Naive thymus-derived CD4-positive, alpha-beta T cell (primary cell): ENCODE measurements at regions of chr3 and their contacts with region 1.

Region 1: GRCh38 chr3:30606301-30607031 is at the start of gene TGFBR2:
- DNase-seq: peak; percentile 57 to 85 (median 69)
- ATAC-seq: peak; percentile 84
- H3K4me3 ChIP-seq: peak within 1 kb of the TSS; percentile 76
- H3K4me3 Mint-ChIP-seq: peak within 1 kb of the TSS; percentile 88 to 100 (median 99)
- H3K27ac ChIP-seq: peak within 1 kb of the TSS; percentile 91
- H3K27ac Mint-ChIP-seq: peak within 1 kb of the TSS; percentile 93 to 100 (median 98)
- H3K4me1 ChIP-seq: peaks cover 32 to 39% of the 10 kb centered on the region in 2 donors
- H3K4me1 Mint-ChIP-seq: peaks cover 45 to 68% (median 55%) of the 10 kb centered on the region in 7 donors
- H3K27me3 ChIP-seq: no peaks in the 10 kb centered on the region
- H3K27me3 Mint-ChIP-seq: no peaks in the 10 kb centered on the region
- total RNA-seq, gene TGFBR2: 63.0 to 171 (median 155) TPM

Region 2: DNA sequence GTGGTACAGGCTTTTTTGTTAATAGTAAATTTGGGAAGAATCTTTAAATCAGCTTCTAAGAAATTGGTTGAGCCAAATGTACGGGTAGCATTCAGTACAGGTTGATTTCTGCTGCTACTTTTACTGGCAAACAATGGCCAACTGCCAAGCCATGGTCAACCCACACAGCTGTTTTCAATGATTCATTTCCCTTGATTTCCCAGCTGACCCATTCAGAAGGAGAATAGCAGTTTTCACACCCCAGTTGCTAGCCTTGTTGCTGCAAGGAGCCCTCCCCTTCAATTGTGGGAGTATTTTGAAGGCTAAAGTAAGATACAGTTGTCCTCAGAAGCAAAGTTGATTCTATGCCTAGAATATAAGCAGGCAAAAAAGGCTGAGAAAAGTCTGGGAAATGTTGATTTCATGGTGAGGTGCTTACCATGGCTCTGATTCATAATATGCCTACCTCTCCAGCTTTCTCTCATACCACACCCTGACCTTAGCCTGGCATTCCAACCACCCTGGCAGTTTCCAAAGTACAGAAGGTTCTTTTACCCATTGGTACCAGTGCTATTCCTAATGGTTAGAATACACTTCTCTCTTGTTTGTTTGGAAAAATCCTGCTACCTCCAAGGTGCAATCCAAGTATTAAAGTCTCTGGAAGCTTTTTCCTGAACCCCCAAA is 320.3 kb before region 1 on chr3:
- CTCF ChIA-PET with region 1: no interaction called
- POLR2A ChIA-PET with region 1: no interaction called
- intact Hi-C with region 1: no loop called
- DNase-seq: no peak
- ATAC-seq: no peak
- H3K4me3 ChIP-seq: no peak overlapping the region
- H3K4me3 Mint-ChIP-seq: no peak overlapping the region
- H3K27ac ChIP-seq: no peak overlapping the region
- H3K27ac Mint-ChIP-seq: no peak overlapping the region
- H3K4me1 ChIP-seq: peaks cover 0 to 9% of the 10 kb centered on the region in 2 donors
- H3K4me1 Mint-ChIP-seq: peaks cover 11 to 26% (median 14%) of the 10 kb centered on the region in 7 donors
- H3K27me3 ChIP-seq: no peaks in the 10 kb centered on the region
- H3K27me3 Mint-ChIP-seq: no peaks in the 10 kb centered on the region

Region 3: GRCh38 chr3:30319713-30320112 is 286.8 kb before region 1 on chr3:
- CTCF ChIA-PET with region 1: interaction called, 3 read pairs
- POLR2A ChIA-PET with region 1: interaction called, 4 read pairs
- intact Hi-C with region 1: loop called in 1 of 2 experiments (anchors 2 kb)
- DNase-seq: peak in 7 of 9 donors; percentile 32 to 72 (median 63)
- ATAC-seq: peak; percentile 90
- H3K4me3 ChIP-seq: no peak overlapping the region
- H3K4me3 Mint-ChIP-seq: peak overlapping the region in 4 of 10 donors; percentile 0 to 7 (median 4)
- H3K27ac ChIP-seq: no peak overlapping the region
- H3K27ac Mint-ChIP-seq: peak overlapping the region in 6 of 9 donors; percentile 1 to 60 (median 43)
- H3K4me1 ChIP-seq: peaks cover 0 to 15% of the 10 kb centered on the region in 2 donors
- H3K4me1 Mint-ChIP-seq: peaks cover 3 to 36% (median 20%) of the 10 kb centered on the region in 7 donors
- H3K27me3 ChIP-seq: no peaks in the 10 kb centered on the region
- H3K27me3 Mint-ChIP-seq: no peaks in the 10 kb centered on the region

Region 4: GRCh38 chr3:30437171-30437601 is 169.3 kb before region 1 on chr3:
- CTCF ChIA-PET with region 1: no interaction called
- POLR2A ChIA-PET with region 1: interaction called, 9 read pairs
- intact Hi-C with region 1: loop called in 1 of 2 experiments (anchors 5 kb)
- DNase-seq: no peak
- ATAC-seq: no peak
- H3K4me3 ChIP-seq: no peak overlapping the region
- H3K4me3 Mint-ChIP-seq: peak overlapping the region in 6 of 10 donors; percentile 12 to 77 (median 22)
- H3K27ac ChIP-seq: no peak overlapping the region
- H3K27ac Mint-ChIP-seq: peak overlapping the region in 5 of 9 donors; percentile 15 to 94 (median 75)
- H3K4me1 ChIP-seq: peaks cover 0 to 23% of the 10 kb centered on the region in 2 donors
- H3K4me1 Mint-ChIP-seq: peaks cover 6 to 47% (median 35%) of the 10 kb centered on the region in 7 donors
- H3K27me3 ChIP-seq: no peaks in the 10 kb centered on the region
- H3K27me3 Mint-ChIP-seq: no peaks in the 10 kb centered on the region

Region 5: GRCh38 chr3:30623351-30623750 is 16.9 kb after region 1 on chr3:
- CTCF ChIA-PET with region 1: interaction called, 9 read pairs
- POLR2A ChIA-PET with region 1: interaction called, 853 read pairs
- intact Hi-C with region 1: no loop called
- DNase-seq: peak in 1 of 9 donors; percentile 7
- ATAC-seq: no peak
- H3K4me3 ChIP-seq: peak overlapping the region; percentile 14
- H3K4me3 Mint-ChIP-seq: peak overlapping the region; percentile 61 to 100 (median 78)
- H3K27ac ChIP-seq: peak overlapping the region; percentile 45
- H3K27ac Mint-ChIP-seq: peak overlapping the region; percentile 83 to 98 (median 94)
- H3K4me1 ChIP-seq: peaks cover 74 to 98% of the 10 kb centered on the region in 2 donors
- H3K4me1 Mint-ChIP-seq: peaks cover 70 to 100% (median 96%) of the 10 kb centered on the region in 7 donors
- H3K27me3 ChIP-seq: no peaks in the 10 kb centered on the region
- H3K27me3 Mint-ChIP-seq: no peaks in the 10 kb centered on the region

Region 6: DNA sequence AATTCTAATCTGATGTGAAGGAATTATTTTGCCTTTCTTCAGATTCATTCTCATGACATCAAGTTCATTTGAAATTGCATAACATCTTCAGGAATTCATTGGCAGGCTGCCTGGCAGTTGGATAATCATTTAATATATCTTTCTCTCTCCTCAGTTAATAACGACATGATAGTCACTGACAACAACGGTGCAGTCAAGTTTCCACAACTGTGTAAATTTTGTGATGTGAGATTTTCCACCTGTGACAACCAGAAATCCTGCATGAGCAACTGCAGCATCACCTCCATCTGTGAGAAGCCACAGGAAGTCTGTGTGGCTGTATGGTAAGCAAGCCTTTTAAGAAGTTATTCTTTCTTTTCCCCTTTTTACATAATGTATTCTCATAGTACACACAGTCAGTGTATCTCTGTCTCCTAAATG is 38.1 kb after region 1 on chr3:
- CTCF ChIA-PET with region 1: interaction called, 3 read pairs
- POLR2A ChIA-PET with region 1: interaction called, 853 read pairs
- intact Hi-C with region 1: loop called (anchors 1 to 5 kb)
- DNase-seq: peak in 7 of 9 donors; percentile 51 to 83 (median 71)
- ATAC-seq: peak; percentile 77
- H3K4me3 ChIP-seq: peak overlapping the region; percentile 23
- H3K4me3 Mint-ChIP-seq: peak overlapping the region; percentile 60 to 88 (median 77)
- H3K27ac ChIP-seq: peak overlapping the region; percentile 69
- H3K27ac Mint-ChIP-seq: peak overlapping the region; percentile 91 to 98 (median 95)
- H3K4me1 ChIP-seq: peaks cover 88 to 98% of the 10 kb centered on the region in 2 donors
- H3K4me1 Mint-ChIP-seq: peaks cover 80 to 99% (median 94%) of the 10 kb centered on the region in 7 donors
- H3K27me3 ChIP-seq: no peaks in the 10 kb centered on the region
- H3K27me3 Mint-ChIP-seq: no peaks in the 10 kb centered on the region

Region 7: DNA sequence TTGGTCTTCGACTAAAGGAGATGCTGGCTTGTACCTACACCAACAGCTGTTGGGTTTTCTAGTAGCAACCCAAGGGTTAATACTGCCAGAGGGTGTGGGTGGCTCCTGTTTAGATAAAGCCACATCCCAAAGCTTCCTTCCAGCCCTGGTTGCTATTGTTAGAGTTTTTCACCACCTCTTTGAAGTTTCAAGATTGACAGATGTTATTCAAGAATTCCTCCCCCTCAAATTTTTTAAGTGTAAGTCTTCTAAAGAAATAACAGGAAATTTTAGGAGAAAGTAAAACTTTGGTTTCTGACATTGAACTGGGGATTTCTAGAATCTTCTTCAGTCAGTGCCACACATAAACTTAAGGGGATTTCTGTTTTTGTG is 60.8 kb after region 1 on chr3:
- CTCF ChIA-PET with region 1: interaction called, 3 read pairs
- POLR2A ChIA-PET with region 1: interaction called, 43 read pairs
- intact Hi-C with region 1: loop called in 1 of 2 experiments (anchors 1 kb)
- DNase-seq: peak in 6 of 9 donors; percentile 60 to 71 (median 66)
- ATAC-seq: peak; percentile 59
- H3K4me3 ChIP-seq: no peak overlapping the region
- H3K4me3 Mint-ChIP-seq: peak overlapping the region; percentile 16 to 88 (median 62)
- H3K27ac ChIP-seq: peak overlapping the region; percentile 72
- H3K27ac Mint-ChIP-seq: peak overlapping the region; percentile 82 to 99 (median 94)
- H3K4me1 ChIP-seq: peaks cover 46 to 95% of the 10 kb centered on the region in 2 donors
- H3K4me1 Mint-ChIP-seq: peaks cover 64 to 100% (median 99%) of the 10 kb centered on the region in 7 donors
- H3K27me3 ChIP-seq: no peaks in the 10 kb centered on the region
- H3K27me3 Mint-ChIP-seq: no peaks in the 10 kb centered on the region

Region 8: GRCh38 chr3:30984855-30985749 is 378.6 kb after region 1 on chr3:
- CTCF ChIA-PET with region 1: no interaction called
- POLR2A ChIA-PET with region 1: no interaction called
- intact Hi-C with region 1: no loop called
- DNase-seq: no peak
- ATAC-seq: no peak
- H3K4me3 ChIP-seq: no peak overlapping the region
- H3K4me3 Mint-ChIP-seq: no peak overlapping the region
- H3K27ac ChIP-seq: no peak overlapping the region
- H3K27ac Mint-ChIP-seq: no peak overlapping the region
- H3K4me1 ChIP-seq: no peaks in the 10 kb centered on the region
- H3K4me1 Mint-ChIP-seq: peaks cover 0 to 11% (median 4%) of the 10 kb centered on the region in 7 donors
- H3K27me3 ChIP-seq: peaks cover 0 to 4% of the 10 kb centered on the region in 2 donors
- H3K27me3 Mint-ChIP-seq: peaks cover 0 to 23% (median 8%) of the 10 kb centered on the region in 5 donors